Activated T-helper 2 cell treated with anti-CD3 and anti-CD28 coated beads, Interferon-gamma antibody, Interleukin-2, Interleukin-4, amounts not matched to agents 10 μg/mL and 5 μg/mL and 100 μg/mL, durations not matched to agents 14 hours and 24 hours and 36 hours (primary cell): ENCODE measurements at regions of chr1 and their contacts with region 1.

Region 1: GRCh38 chr1:1374929-1375662 is at the start of gene AURKAIP1:
- DNase-seq: peak; percentile 97
- H3K4me3 Mint-ChIP-seq: peak within 1 kb of the TSS; percentile 87
- H3K27ac Mint-ChIP-seq: peak within 1 kb of the TSS; percentile 95
- H3K4me1 Mint-ChIP-seq: peaks cover 16% of the 10 kb centered on the region
- H3K27me3 Mint-ChIP-seq: no peaks in the 10 kb centered on the region
- total RNA-seq, gene AURKAIP1: 133 TPM in 2 replicates

Region 2: DNA sequence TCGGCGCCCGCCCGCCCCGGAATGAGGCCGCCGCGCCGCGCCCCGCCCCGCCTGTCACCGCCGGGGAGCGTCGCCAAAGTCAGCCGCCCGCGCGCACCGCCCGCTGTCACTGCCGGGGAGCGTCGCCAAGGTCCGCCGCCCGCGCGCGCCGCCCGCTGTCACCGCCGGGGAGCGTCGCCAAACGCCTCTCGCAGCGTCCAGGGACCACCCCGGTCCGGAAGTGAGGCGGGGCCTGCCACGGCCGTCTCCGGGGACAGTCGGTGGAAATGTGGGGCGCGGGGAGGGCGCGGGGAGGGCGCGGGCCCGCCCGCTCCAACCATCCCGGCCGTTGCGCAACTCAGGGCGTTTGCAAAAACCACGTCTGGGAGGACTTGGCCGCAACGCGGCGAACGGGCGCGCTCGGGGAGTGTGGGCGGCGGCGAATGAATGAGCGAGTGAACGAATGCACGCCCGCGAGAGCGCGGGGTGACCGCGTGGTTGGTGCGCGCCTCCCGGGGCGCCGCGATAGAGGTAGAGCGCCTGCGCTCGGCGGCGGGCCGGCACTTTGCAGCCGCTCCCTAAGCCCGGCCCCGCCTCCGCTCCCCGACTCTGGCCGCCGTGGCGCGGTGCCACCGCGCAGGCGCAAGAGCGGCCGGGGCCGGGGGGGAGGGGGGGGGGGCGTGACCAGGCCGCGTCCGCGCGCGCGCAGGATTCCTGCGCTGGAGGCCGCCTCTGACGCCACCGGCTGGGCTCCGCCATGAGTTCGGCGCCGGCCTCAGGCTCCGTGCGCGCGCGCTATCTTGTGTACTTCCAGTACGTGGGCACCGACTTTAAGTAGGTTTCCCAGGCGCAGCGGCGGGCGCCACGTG is 67.0 kb before region 1 on chr1 and contains the starts of genes ACAP3 and PUSL1:
- intact Hi-C with region 1: loop called (anchors 10 kb)
- DNase-seq: peak; percentile 89
- H3K4me3 Mint-ChIP-seq: peak within 1 kb of the TSS; percentile 85
- H3K27ac Mint-ChIP-seq: peak within 1 kb of the TSS; percentile 79
- H3K4me1 Mint-ChIP-seq: peaks cover 10% of the 10 kb centered on the region
- H3K27me3 Mint-ChIP-seq: no peaks in the 10 kb centered on the region
- total RNA-seq, gene ACAP3: 43.4 and 50.1 TPM in 2 replicates
- total RNA-seq, gene PUSL1: 31.6 and 31.8 TPM in 2 replicates

Region 3: GRCh38 chr1:1337793-1338147 is 37.3 kb before region 1 on chr1:
- intact Hi-C with region 1: no loop called
- DNase-seq: no peak
- H3K4me3 Mint-ChIP-seq: no peak overlapping the region
- H3K27ac Mint-ChIP-seq: no peak overlapping the region
- H3K4me1 Mint-ChIP-seq: no peaks in the 10 kb centered on the region
- H3K27me3 Mint-ChIP-seq: no peaks in the 10 kb centered on the region

Region 4: DNA sequence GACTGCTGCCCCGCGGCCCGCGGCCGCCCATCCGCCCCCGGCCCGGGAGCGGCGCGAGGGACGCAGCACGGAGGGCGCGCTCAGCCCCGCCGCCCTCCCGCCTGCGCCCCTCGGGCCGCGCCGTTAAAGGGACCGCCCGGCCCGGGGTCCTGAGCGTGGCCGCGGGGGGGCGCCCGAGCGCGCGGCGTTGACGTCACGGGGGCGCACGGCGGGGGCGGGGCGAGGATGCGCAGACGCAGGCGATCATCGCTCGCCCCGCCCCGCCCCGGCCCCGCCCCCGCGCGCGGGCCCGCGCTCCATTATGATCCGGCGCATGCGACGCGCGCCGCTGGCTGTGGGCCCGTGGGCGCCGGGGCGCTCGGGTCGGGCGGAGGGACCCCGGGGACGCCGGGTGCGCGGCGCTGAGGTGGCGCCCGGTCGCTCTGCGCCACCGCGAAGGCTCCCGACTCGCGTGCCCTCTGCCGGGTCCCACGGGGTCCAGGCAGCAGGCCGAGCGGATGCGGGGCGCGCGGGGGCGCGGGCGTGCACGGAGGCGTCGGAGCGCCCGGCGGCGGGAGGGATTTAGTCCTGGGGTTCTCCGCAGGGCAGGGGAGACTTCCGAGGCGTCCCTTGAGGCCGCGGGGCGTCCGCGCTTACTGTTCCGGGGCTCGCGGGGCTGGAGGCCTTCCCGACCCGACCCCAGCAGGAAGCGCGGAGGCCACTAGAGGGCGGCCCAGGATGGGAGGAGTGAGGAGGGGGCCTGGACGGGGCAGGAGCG is 25.7 kb before region 1 on chr1 and contains the start of gene DVL1:
- intact Hi-C with region 1: loop called (anchors 2 kb)
- DNase-seq: peak; percentile 62
- H3K4me3 Mint-ChIP-seq: peak within 1 kb of the TSS; percentile 77
- H3K27ac Mint-ChIP-seq: peak within 1 kb of the TSS; percentile 28
- H3K4me1 Mint-ChIP-seq: peaks cover 5% of the 10 kb centered on the region
- H3K27me3 Mint-ChIP-seq: peaks cover 16% of the 10 kb centered on the region
- total RNA-seq, gene DVL1: 53.8 and 60.7 TPM in 2 replicates

Region 5: DNA sequence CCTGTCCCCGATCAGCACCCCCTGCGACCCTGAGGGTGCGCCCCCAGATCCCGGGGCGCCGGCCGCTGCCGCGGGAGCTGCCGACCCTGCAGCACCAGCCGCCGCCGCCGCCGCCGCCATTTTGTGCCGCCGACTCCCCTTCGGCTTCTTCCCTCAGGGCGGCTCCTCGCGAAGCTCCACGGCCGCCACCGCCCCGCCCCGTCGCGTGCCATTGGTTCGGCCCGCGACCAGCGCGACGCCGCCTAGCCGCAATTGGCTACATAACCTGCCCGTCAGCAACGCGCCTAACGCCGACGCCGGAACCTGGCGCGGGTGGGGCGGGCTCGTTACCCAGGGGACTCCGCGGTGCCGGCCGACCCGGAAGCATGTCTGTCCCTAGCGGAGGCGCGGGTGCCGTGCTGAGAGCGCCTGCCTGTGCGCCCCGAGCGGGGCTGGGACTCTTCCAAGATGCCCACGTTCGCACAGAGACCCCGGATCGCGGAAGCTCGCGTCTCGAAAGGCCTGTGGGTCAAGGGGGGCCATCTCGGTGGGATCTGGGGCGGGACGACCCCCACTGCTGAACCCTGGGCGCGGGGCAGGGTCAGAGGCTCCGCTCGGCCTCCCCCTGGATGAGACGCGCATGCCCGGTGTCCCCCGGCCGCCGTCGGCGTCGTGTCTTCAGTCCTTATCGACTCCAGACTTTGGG is 24.2 kb after region 1 on chr1 and contains the start of gene CCNL2:
- intact Hi-C with region 1: loop called (anchors 1 kb)
- DNase-seq: peak; percentile 100
- H3K4me3 Mint-ChIP-seq: peak within 1 kb of the TSS; percentile 95
- H3K27ac Mint-ChIP-seq: peak within 1 kb of the TSS; percentile 89
- H3K4me1 Mint-ChIP-seq: peaks cover 34% of the 10 kb centered on the region
- H3K27me3 Mint-ChIP-seq: no peaks in the 10 kb centered on the region
- total RNA-seq, gene CCNL2: 123 and 124 TPM in 2 replicates

Region 6: DNA sequence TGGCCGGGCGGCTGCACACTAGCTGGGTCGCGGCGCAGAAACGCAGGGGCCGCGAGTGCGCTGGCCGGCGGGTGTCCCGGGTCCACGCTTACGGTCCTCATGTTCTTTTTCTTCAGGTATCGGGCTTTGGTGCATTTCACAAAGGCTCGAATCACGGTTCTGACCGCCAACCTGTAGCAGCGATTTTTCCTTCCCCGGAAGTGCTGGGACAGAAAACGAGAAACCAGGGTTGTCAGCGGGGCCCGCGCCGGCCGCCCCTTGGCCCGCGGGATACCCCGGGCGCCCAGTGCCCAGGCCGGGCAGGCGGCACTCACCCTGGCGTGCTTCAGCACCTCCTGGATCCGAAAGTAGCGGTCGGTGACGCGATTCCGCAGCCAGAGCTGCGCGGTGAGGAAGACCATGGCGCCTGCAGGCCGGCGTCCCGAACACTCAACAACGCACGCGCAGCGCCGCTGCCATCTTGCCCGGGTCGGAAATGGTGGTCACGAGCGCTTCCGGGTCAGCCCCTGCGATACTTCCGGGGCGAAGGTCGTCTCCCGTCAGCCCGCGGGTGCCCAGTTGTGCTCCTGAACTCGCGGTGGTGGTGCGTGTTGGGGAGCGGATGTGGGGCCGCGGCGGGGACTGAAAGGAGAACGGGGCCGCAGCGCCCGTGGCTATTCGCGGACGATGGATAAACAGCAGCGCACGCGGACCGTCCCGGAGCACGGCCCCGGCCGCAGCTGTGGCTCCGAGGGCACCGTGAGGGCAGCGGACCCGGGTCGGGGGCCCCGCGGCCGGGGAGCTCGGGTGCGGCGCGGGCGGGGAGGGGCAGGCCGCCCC is 31.9 kb after region 1 on chr1 and contains the start of gene MRPL20:
- intact Hi-C with region 1: loop called (anchors 1 kb)
- DNase-seq: peak; percentile 96
- H3K4me3 Mint-ChIP-seq: peak within 1 kb of the TSS; percentile 88
- H3K27ac Mint-ChIP-seq: peak within 1 kb of the TSS; percentile 89
- H3K4me1 Mint-ChIP-seq: peaks cover 23% of the 10 kb centered on the region
- H3K27me3 Mint-ChIP-seq: no peaks in the 10 kb centered on the region
- total RNA-seq, gene MRPL20: 143 and 154 TPM in 2 replicates